ENCODE measurements at regions of chr7 and their contacts with region 1.

Region 1: GRCh38 chr7:115910541-115911164 is 119.9 kb downstream of the TFEC start:
- DNase-seq: peak; percentile 64
- H3K4me3 ChIP-seq: no peak overlapping the region
- H3K27ac ChIP-seq: no peak overlapping the region
- H3K4me1 ChIP-seq: no peaks in the 10 kb centered on the region
- H3K27me3 ChIP-seq: no peaks in the 10 kb centered on the region
- CTCF ChIP-seq: peak in 1 of 2 donors; percentile 53
- POLR2A ChIP-seq: no peak

Region 2: GRCh38 chr7:115356139-115356746 is 554.4 kb before region 1 on chr7:
- CTCF ChIA-PET with region 1: interaction called, 3 read pairs
- POLR2A ChIA-PET with region 1: no interaction called
- dilution Hi-C with region 1: no loop called
- intact Hi-C with region 1: loop called (anchors 5 kb)
- DNase-seq: peak; percentile 16
- H3K4me3 ChIP-seq: no peak overlapping the region
- H3K27ac ChIP-seq: no peak overlapping the region
- H3K4me1 ChIP-seq: no peaks in the 10 kb centered on the region
- H3K27me3 ChIP-seq: no peaks in the 10 kb centered on the region
- CTCF ChIP-seq: peak; percentile 24 to 43
- POLR2A ChIP-seq: no peak

Region 3: GRCh38 chr7:115952832-115953231 is 42.2 kb after region 1 on chr7:
- CTCF ChIA-PET with region 1: no interaction called
- POLR2A ChIA-PET with region 1: no interaction called
- dilution Hi-C with region 1: no loop called
- intact Hi-C with region 1: no loop called
- DNase-seq: no peak
- H3K4me3 ChIP-seq: no peak overlapping the region
- H3K27ac ChIP-seq: no peak overlapping the region
- H3K4me1 ChIP-seq: no peaks in the 10 kb centered on the region
- H3K27me3 ChIP-seq: no peaks in the 10 kb centered on the region
- CTCF ChIP-seq: no peak
- POLR2A ChIP-seq: no peak